ENCODE measurements at regions of chrX and their contacts with region 1.

Region 1: GRCh38 chrX:53093748-53094583 is at the start of gene KANTR:
- DNase-seq: peak; percentile 77
- H3K4me3 Mint-ChIP-seq: peak within 1 kb of the TSS; percentile 90
- H3K27ac Mint-ChIP-seq: peak within 1 kb of the TSS; percentile 90
- H3K4me1 Mint-ChIP-seq: peaks cover 30% of the 10 kb centered on the region
- H3K27me3 Mint-ChIP-seq: peaks cover 1% of the 10 kb centered on the region
- total RNA-seq, gene KANTR: 6.8 and 9.2 TPM in 2 replicates

Region 2: DNA sequence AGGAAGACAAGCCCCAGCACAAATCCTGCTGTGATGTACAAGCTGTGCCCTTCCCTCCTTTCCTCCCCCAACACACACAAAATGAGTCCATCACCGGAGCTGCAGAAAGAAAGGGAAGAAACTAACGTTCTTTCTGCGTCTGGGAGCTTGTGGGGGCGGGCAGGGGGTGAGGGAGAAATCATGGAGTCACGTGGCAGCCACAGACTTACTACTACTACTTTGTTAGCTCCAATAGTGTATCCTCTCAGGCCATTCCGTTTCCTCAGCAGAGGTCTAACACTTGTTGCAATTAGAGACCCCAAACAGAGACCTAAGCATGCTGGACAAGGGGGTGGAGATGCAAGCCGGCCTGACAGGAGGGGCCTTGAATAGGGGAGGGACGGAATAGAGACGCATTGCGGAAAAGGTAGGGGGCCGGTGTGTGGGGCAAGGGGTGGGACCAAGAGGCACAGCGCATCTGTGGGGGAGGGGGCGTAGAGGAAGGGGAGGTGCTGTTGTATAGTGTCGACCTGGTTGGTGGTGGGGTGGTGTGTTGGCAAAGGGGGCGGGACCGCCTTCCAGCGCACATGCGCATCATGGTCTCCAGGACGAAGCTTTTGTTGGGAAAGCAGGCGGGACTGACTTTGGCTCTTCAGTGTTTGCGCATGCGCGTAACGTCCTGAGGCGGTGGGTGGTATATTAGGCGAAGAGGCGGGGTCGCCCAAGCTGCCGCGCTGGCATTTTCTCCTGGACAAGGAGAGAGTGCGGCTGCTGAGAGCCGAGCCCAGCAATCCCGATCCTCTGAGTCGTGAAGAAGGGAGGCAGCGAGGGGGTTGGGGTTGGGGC is 1200.8 kb before region 1 on chrX and contains the start of gene MAGED1:
- intact Hi-C with region 1: loop called (anchors 5 kb)
- DNase-seq: peak; percentile 69
- H3K4me3 Mint-ChIP-seq: peak within 1 kb of the TSS; percentile 89
- H3K27ac Mint-ChIP-seq: peak within 1 kb of the TSS; percentile 83
- H3K4me1 Mint-ChIP-seq: peaks cover 22% of the 10 kb centered on the region
- H3K27me3 Mint-ChIP-seq: no peaks in the 10 kb centered on the region
- total RNA-seq, gene MAGED1: 32.7 and 34.8 TPM in 2 replicates

Region 3: DNA sequence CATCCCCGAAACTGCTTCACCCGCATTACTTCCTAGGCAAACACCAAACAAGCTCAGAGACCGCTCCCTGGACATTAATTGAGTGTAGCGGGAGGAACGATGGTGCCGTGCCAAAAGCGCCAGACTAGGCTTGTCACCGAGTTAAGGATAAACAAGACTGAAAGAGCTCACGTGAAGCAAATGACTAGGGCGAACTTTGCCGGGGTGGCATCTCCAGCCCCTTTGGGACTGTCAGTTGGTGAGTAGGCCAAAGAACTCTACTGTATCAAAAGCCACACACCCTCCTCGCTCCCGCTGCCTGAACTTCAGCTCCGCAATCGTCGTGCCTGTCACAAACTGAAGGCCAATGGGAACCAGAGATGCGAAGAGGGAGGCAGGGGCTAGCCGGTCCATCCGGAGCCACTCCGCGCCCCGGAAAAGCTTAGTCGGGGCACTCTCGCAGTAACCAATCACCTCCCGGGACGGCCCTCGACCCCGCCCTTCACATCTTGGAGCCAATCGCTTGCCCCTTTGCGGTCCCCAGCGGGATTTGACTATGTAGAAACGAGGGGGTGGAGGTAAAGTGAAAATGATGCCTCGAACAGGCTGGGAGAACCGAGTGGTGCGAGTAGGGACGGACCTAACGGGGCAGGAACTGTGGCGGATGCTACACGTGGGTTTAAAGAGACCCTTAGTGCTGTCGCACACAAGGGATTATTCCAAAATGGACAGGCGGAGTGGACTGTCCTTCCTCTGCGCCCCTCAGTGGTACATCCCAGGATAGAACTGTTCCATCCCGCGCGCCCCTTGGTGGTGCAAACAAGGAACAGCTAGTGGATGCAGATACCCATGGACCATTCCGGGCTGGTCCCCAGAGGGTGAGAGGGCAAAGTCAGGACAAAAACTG is 98.6 kb before region 1 on chrX:
- intact Hi-C with region 1: loop called (anchors 1 kb)
- DNase-seq: peak; percentile 88
- H3K4me3 Mint-ChIP-seq: peak overlapping the region; percentile 89
- H3K27ac Mint-ChIP-seq: peak overlapping the region; percentile 95
- H3K4me1 Mint-ChIP-seq: peaks cover 21% of the 10 kb centered on the region
- H3K27me3 Mint-ChIP-seq: no peaks in the 10 kb centered on the region

Region 4: DNA sequence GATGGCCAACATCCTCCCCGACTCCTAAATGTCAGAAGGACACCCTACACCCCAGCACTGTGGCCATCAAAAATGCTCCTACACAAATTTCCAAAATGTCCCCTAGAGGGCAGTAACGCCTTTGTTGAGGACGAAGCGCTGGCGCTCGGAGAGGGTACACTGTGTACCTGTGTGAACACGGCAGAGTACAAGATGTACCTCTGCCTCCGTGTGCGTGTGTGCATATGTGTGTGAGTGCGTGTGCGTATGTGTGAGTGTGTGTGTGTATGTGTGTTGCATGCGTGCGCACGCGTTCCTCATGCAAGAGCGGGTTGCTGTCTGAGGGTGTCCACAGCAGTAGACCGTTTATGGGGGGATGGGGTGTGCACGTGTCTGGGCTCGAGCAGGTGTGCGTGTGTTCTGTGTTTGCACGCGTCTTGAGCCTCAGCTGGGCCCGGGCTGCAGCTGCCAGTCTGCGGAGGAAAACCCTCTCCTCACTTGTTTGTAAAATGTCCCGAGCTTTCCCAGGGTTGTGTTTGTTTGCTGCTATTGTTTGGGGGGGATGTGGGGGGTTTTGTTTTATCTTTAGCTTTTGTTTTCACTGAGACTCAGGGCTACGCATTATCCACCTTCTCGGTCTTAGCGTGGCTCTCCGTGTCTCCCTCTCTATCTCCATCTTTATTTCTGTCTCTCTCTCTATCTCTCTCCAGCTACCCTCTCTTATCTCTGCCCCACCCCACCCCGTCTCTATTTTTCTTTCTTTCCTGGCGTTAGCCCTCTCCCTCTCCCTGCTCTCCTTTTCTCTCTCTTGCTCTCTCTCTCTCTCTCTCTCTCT is 22.2 kb before region 1 on chrX:
- intact Hi-C with region 1: loop called (anchors 1 kb)
- DNase-seq: peak; percentile 52
- H3K4me3 Mint-ChIP-seq: peak overlapping the region; percentile 75
- H3K27ac Mint-ChIP-seq: peak overlapping the region; percentile 84
- H3K4me1 Mint-ChIP-seq: peaks cover 23% of the 10 kb centered on the region
- H3K27me3 Mint-ChIP-seq: peaks cover 3% of the 10 kb centered on the region

Region 5: GRCh38 chrX:53081925-53082772 is 11.8 kb before region 1 on chrX and contains the start of gene TSPYL2:
- intact Hi-C with region 1: loop called (anchors 1 kb)
- DNase-seq: peak; percentile 89
- H3K4me3 Mint-ChIP-seq: peak within 1 kb of the TSS; percentile 94
- H3K27ac Mint-ChIP-seq: peak within 1 kb of the TSS; percentile 99
- H3K4me1 Mint-ChIP-seq: peaks cover 29% of the 10 kb centered on the region
- H3K27me3 Mint-ChIP-seq: no peaks in the 10 kb centered on the region
- total RNA-seq, gene TSPYL2: 37.5 and 40.3 TPM in 2 replicates

Region 6: DNA sequence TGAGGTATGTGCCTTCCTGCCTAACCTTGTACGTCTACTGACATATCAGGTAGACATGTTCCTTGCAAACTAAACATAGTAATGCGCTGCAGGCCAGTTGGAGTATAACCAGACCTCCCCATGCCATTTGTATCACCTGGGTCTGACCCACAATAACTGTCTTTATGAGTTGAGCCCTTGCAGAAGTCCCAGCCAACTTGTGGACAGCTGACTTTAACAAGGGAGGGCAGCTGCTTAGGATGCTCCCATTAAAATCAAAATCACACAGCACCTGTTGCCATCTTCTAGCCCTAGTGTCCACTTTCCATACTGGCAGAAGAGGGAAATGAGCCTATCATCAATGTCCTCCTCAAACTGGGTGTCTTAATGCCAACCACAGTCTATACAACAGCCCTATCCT is 41.6 kb after region 1 on chrX:
- intact Hi-C with region 1: no loop called
- DNase-seq: no peak
- H3K4me3 Mint-ChIP-seq: no peak overlapping the region
- H3K27ac Mint-ChIP-seq: no peak overlapping the region
- H3K4me1 Mint-ChIP-seq: no peaks in the 10 kb centered on the region
- H3K27me3 Mint-ChIP-seq: no peaks in the 10 kb centered on the region

Region 7: DNA sequence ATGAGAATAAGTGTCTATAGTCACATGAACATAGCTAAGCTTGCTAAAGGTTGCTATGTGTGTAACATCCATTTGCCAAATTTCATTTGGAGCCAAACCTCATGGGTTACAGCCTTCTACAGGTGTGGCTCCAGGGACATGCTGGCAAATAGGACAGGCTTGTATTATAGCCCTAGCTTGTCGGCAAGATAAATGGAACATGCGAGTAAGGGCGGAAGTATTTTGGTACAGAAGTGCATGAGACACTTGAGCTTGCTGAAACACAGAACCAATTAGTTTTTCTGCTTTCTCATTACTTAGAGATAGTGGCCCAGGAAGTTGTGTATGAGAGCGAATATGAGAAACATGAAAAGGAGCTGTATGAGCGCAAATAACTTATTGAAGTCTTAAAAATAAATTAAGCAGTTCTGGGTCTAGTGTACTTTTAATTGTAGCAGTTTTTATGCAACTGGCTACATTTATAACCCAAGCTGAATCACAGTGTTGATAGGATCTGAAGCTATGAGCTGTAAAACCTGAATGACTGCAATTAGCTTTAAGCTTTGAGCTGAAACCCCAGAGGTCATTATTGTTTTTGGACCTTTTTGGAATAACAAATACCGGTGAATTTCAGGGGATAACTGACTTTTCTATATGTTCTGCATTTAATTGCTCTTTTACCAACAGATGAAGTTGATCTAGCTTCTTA is 66.5 kb after region 1 on chrX:
- intact Hi-C with region 1: no loop called
- DNase-seq: no peak
- H3K4me3 Mint-ChIP-seq: no peak overlapping the region
- H3K27ac Mint-ChIP-seq: no peak overlapping the region
- H3K4me1 Mint-ChIP-seq: no peaks in the 10 kb centered on the region
- H3K27me3 Mint-ChIP-seq: no peaks in the 10 kb centered on the region

Region 8: GRCh38 chrX:53321230-53321942 is 227.4 kb after region 1 on chrX:
- intact Hi-C with region 1: no loop called
- DNase-seq: no peak
- H3K4me3 Mint-ChIP-seq: peak overlapping the region; percentile 71
- H3K27ac Mint-ChIP-seq: no peak overlapping the region
- H3K4me1 Mint-ChIP-seq: peaks cover 17% of the 10 kb centered on the region
- H3K27me3 Mint-ChIP-seq: peaks cover 53% of the 10 kb centered on the region

Region 9: DNA sequence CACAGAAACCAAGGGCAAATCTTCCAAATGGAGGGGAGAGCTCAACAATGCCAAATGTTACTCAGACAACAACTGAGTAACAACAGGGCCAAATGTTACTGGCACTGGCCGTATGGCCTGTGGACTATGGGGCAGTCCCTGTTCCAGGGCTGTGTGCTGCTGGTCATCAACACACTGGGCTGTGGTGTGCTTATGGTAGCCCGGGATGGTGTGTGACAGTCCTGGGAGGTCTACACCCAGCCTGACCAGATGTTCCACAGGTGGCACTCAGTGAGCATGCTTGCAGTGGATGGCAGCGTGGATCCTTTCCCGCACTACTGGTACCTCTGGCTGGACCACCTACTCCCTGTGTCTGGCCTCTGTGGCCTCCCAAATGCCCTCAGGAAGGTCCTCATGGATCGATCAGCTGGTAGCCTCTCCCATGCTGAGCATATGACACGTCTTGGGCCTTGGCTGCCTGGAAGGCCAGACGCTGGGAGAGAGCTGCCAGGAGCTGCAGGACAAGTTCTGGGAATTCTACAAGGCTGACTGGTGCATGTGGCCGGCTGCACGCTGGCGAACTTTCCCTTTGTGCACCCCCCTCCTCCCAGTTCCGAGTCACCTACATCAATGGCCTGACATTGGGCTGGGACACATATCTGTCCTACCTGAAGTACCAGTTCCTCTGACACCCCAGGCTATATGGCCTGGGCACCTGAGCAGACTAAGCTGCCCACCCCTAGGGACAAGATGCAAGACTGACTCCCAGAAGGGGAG is 247.1 kb after region 1 on chrX:
- intact Hi-C with region 1: no loop called
- DNase-seq: no peak
- H3K4me3 Mint-ChIP-seq: no peak overlapping the region
- H3K27ac Mint-ChIP-seq: no peak overlapping the region
- H3K4me1 Mint-ChIP-seq: no peaks in the 10 kb centered on the region
- H3K27me3 Mint-ChIP-seq: peaks cover 1% of the 10 kb centered on the region

Region 10: GRCh38 chrX:53422086-53422860 is 328.3 kb after region 1 on chrX and contains the start of gene SMC1A:
- intact Hi-C with region 1: loop called (anchors 5 kb)
- DNase-seq: peak; percentile 93
- H3K4me3 Mint-ChIP-seq: peak within 1 kb of the TSS; percentile 97
- H3K27ac Mint-ChIP-seq: peak within 1 kb of the TSS; percentile 95
- H3K4me1 Mint-ChIP-seq: peaks cover 35% of the 10 kb centered on the region
- H3K27me3 Mint-ChIP-seq: no peaks in the 10 kb centered on the region
- total RNA-seq, gene SMC1A: 122 and 138 TPM in 2 replicates

Measured in activated T-helper 1 cell treated with anti-CD3 and anti-CD28 coated beads, Interleukin-12 subunit alpha, Interleukin-12 subunit beta, Interleukin-2, Interleukin-4 antibody, amounts not matched to agents 30 ng/mL and 10 ng/mL and 1 ng/mL, durations not matched to agents 14 hours and 24 hours and 36 hours (primary cell).